ENCODE measurements at regions of chr9 and their contacts with region 1.

Region 1: GRCh38 chr9:108272349-108272899 is 583.4 kb downstream of the ACTL7B start:
- DNase-seq: peak; percentile 54
- ATAC-seq: peak; percentile 80
- H3K4me3 ChIP-seq: peak overlapping the region; percentile 65
- H3K27ac ChIP-seq: peak overlapping the region; percentile 81
- H3K4me1 ChIP-seq: peaks cover 35% of the 10 kb centered on the region
- H3K27me3 ChIP-seq: no peaks in the 10 kb centered on the region
- CTCF ChIP-seq: peak; percentile 65

Region 2: DNA sequence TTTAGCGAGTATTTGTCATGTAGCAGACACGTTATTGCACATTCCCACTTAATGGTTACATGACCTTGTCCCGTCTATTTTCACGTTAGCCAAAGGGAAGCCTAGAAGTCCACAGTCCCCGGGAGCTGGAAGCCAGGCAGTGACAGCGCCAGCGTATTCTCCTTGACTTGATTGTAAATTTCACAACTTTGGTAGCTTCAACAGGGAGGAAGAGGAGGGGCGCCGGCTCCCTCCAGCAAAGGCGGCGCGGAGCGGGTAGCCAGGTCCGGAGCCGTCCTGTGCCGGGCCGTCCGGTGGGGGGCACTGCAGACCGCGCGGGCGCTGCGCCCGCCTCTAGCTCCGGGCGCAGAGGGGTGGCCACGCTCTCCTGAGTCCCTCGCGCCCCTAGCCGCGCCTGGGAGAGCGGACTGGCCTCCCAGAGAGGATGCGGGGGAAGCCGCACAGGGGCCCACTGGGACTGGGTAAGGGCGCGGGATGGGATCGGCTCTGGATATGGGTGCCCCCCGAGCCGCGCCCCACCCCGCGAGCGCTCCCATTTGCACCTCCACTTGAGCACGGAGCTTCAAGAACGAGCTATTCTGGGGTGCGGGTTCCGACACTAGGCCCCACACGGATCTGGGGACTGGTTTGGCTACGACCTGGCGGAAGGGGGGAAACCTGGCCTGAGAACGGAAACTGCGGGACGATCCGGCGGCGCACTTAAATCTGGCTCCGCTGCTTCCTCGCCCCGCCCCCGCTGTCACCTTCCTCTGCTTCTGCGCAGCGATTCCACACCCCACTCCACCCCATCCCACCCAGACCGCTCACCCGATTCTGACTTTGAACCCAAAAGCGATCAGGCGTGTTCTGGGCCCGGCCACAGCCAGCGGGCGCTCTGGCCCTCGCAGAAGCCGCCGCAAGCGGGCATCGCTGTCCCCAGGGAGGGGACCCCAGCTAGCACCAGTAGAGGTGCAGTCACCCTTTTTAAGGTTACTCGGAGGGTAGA is 806.7 kb before region 1 on chr9:
- CTCF ChIA-PET with region 1: no interaction called
- POLR2A ChIA-PET with region 1: no interaction called
- intact Hi-C with region 1: loop called (anchors 5 kb)
- DNase-seq: peak; percentile 55
- ATAC-seq: peak; percentile 94
- H3K4me3 ChIP-seq: peak overlapping the region; percentile 85
- H3K27ac ChIP-seq: no peak overlapping the region
- H3K4me1 ChIP-seq: 0 out of 2 replicates have a peak, but pooled peaks cover 4% of the 10 kb centered on the region
- H3K27me3 ChIP-seq: no peaks in the 10 kb centered on the region
- CTCF ChIP-seq: peak; percentile 73

Region 3: DNA sequence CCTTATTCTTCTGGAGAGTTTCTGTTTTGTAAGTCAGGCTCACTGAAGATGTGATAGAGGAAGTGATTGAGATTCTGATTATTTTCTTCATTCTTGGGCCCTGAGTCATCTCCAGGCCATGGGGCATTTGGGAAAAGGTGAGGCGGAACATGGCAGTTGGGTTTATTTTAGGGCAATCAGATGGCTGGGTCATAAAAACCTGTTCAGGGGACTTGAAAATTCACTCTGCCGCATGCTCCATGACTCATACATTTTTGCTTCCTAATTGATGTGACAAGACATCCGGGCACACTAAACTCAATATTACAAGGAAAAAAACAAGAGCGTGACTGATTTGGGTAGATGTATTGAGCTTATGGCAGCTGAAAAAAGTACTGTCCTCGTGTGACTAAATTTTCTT is 517.1 kb before region 1 on chr9:
- CTCF ChIA-PET with region 1: interaction called, 4 read pairs
- POLR2A ChIA-PET with region 1: no interaction called
- intact Hi-C with region 1: loop called (anchors 1 kb)
- DNase-seq: peak; percentile 92
- ATAC-seq: peak; percentile 57
- H3K4me3 ChIP-seq: no peak overlapping the region
- H3K27ac ChIP-seq: peak overlapping the region; percentile 89
- H3K4me1 ChIP-seq: peaks cover 44% of the 10 kb centered on the region
- H3K27me3 ChIP-seq: no peaks in the 10 kb centered on the region
- CTCF ChIP-seq: no peak

Region 4: GRCh38 chr9:107847978-107848964 is 424.2 kb before region 1 on chr9:
- CTCF ChIA-PET with region 1: no interaction called
- POLR2A ChIA-PET with region 1: no interaction called
- intact Hi-C with region 1: loop called (anchors 1 kb)
- DNase-seq: peak; percentile 56
- ATAC-seq: peak; percentile 71
- H3K4me3 ChIP-seq: no peak overlapping the region
- H3K27ac ChIP-seq: no peak overlapping the region
- H3K4me1 ChIP-seq: peaks cover 12% of the 10 kb centered on the region
- H3K27me3 ChIP-seq: no peaks in the 10 kb centered on the region
- CTCF ChIP-seq: no peak

Region 5: DNA sequence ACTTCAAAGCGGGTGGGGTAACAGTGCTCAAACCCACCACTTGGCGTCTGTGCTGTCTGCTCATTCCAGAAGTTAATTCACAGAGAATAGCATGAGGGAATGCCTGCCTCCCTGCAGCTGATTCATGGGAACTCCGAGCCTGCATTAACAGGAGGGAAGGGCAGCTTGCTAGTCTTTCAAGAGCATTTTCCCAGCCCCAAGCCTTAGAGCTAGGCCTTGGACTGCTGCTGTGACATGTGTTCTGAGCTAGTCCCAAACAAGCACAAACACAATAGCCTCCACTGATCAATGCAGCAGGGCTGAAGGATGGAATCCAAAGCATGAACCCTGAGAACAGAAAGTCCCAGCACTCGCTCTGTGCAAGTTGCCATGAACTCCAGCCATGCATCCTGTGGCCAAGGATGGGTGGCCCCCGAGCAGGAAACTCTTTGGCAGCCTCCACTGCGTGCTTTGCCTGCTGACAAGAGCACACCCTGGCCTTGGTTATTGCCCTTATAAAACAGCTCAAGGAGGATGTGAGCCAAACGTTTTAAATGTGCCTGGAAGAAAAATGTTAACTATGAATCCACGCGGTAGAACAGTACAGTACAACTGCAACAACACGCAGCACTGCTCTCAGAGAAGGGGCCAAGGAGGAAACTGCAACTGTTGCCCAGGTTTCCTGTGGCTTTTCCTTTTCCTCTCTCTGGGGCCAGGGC is 129.8 kb before region 1 on chr9:
- CTCF ChIA-PET with region 1: no interaction called
- POLR2A ChIA-PET with region 1: no interaction called
- intact Hi-C with region 1: loop called (anchors 5 kb)
- DNase-seq: no peak
- ATAC-seq: peak; percentile 95
- H3K4me3 ChIP-seq: no peak overlapping the region
- H3K27ac ChIP-seq: no peak overlapping the region
- H3K4me1 ChIP-seq: no peaks in the 10 kb centered on the region
- H3K27me3 ChIP-seq: no peaks in the 10 kb centered on the region
- CTCF ChIP-seq: no peak

Region 6: GRCh38 chr9:108565651-108566378 is 293.4 kb after region 1 on chr9:
- CTCF ChIA-PET with region 1: no interaction called
- POLR2A ChIA-PET with region 1: no interaction called
- intact Hi-C with region 1: loop called (anchors 1 kb)
- DNase-seq: peak; percentile 90
- ATAC-seq: peak; percentile 72
- H3K4me3 ChIP-seq: no peak overlapping the region
- H3K27ac ChIP-seq: peak overlapping the region; percentile 74
- H3K4me1 ChIP-seq: peaks cover 25% of the 10 kb centered on the region
- H3K27me3 ChIP-seq: no peaks in the 10 kb centered on the region
- CTCF ChIP-seq: peak; percentile 90